Thyroid gland (tissue), 4 donors: ENCODE measurements at regions of chr14 and their contacts with region 1.

Region 1: GRCh38 chr14:71320107-71320733 is 413.0 kb downstream of the PCNX1 start:
- DNase-seq: peak; percentile 97 to 99
- H3K4me3 ChIP-seq: peak within 1 kb of the TSS; percentile 70 to 92 (median 92)
- H3K27ac ChIP-seq: peak within 1 kb of the TSS; percentile 93 to 98 (median 98)
- H3K4me1 ChIP-seq: peaks cover 8 to 15% of the 10 kb centered on the region in 2 donors
- H3K27me3 ChIP-seq: no peaks in the 10 kb centered on the region
- CTCF ChIP-seq: peak in 2 of 6 experiments; percentile 25
- POLR2A ChIP-seq: peak; percentile 69 to 87

Region 2: DNA sequence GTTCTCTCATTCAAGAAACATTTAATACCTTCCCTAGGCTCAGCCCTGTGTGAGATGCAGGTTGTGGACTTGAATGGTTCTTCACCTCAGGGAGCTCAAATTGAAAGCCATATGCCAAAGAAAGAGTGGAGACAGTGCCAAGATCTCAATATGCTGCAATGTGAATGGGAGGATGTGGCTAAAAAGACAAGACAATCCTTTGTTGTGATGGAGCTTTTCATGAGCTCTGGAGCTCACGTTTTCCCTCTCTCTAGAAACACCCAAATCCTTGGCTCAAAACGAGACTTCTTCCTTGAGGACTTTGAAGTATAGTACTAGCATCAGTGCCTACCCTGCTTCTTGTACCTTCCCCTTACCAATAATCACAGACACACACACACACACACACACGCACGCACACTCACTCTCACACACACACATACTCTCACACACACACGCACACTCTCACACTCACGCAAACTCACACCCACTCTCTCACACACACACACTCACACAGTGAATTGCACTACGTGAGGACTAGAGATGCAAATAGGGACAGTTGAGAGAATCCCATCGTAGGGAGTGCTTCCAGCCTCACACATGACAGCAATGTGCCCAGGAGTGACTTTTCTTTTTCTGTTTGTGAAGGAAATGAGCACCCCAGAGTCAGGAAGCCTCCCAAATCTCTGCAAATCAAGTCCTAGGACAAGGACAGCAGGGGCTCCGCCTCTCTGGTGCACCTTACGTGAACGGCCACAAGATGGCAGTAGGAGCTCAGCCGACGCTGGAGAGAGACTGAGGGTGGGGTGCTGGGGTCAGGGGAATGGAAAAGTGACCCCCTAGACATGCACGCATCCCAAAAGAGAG is 181.5 kb before region 1 on chr14:
- intact Hi-C with region 1: loop called (anchors 10 kb)
- DNase-seq: peak; percentile 37 to 40
- H3K4me3 ChIP-seq: no peak overlapping the region
- H3K27ac ChIP-seq: no peak overlapping the region
- H3K4me1 ChIP-seq: no peaks in the 10 kb centered on the region
- H3K27me3 ChIP-seq: no peaks in the 10 kb centered on the region
- CTCF ChIP-seq: peak; percentile 81 to 94 (median 86)
- POLR2A ChIP-seq: no peak

Region 3: GRCh38 chr14:71472043-71472960 is 152.1 kb after region 1 on chr14:
- intact Hi-C with region 1: no loop called
- DNase-seq: no peak
- H3K4me3 ChIP-seq: no peak overlapping the region
- H3K27ac ChIP-seq: no peak overlapping the region
- H3K4me1 ChIP-seq: peaks cover 0 to 14% of the 10 kb centered on the region in 2 donors
- H3K27me3 ChIP-seq: no peaks in the 10 kb centered on the region
- CTCF ChIP-seq: no peak
- POLR2A ChIP-seq: no peak

Region 4: GRCh38 chr14:71739273-71739937 is 419.2 kb after region 1 on chr14:
- intact Hi-C with region 1: loop called (anchors 10 kb)
- DNase-seq: no peak
- H3K4me3 ChIP-seq: no peak overlapping the region
- H3K27ac ChIP-seq: no peak overlapping the region
- H3K4me1 ChIP-seq: peaks cover 0 to 9% of the 10 kb centered on the region in 2 donors
- H3K27me3 ChIP-seq: no peaks in the 10 kb centered on the region
- CTCF ChIP-seq: peak in 1 of 6 experiments; percentile 13
- POLR2A ChIP-seq: no peak

Region 5: DNA sequence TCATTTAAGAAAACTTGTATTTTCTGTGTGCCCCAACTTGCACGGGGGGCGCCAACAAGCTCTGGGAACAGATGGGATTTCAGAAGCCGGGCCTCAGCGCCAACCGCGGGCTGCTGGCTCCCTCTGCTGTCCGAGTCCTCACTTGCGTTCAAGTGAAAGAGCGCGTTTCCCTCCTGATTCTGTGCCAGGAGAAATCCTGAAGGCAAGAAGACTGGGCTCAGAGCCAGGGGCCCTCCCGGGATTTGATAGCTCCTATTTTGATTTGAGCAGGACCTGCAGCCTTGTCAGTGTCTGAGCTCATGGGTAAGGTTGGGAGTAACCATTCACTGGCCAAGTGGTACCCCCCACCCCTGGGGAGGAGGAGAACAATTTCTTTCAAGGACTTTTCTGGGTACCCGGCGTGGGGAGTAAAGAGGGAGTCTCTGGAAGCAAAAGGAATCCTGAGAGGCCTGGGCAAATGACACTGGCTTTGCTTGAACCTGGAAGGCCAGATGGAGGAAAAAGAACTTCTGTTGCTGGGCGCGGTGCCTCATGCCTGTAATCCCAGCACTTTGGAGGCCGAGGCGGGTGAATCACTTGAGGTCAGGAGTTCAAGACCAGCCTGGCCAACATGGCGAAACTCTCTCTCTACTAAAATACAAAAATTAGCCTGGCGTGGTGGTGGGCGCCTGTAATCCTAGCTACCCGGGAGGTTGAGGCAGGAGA is 433.1 kb after region 1 on chr14:
- intact Hi-C with region 1: loop called (anchors 2 kb)
- DNase-seq: peak; percentile 94
- H3K4me3 ChIP-seq: no peak overlapping the region
- H3K27ac ChIP-seq: no peak overlapping the region
- H3K4me1 ChIP-seq: peaks cover 0 to 2% of the 10 kb centered on the region in 2 donors
- H3K27me3 ChIP-seq: no peaks in the 10 kb centered on the region
- CTCF ChIP-seq: peak; percentile 69 to 98 (median 94)
- POLR2A ChIP-seq: no peak